Tibial artery (tissue), 4 donors: ENCODE measurements at regions of chr3 and their contacts with region 1.

Region 1: GRCh38 chr3:128680602-128681368 is 30.2 kb upstream of the RPN1 start:
- DNase-seq: peak; percentile 99 to 100
- H3K4me3 ChIP-seq: peak overlapping the region; percentile 58 to 64
- H3K27ac ChIP-seq: peak overlapping the region; percentile 81 to 87
- H3K4me1 ChIP-seq: peaks cover 0 to 6% (median 2%) of the 10 kb centered on the region in 4 donors
- H3K27me3 ChIP-seq: no peaks in the 10 kb centered on the region
- CTCF ChIP-seq: peak; percentile 95 to 100

Region 2: DNA sequence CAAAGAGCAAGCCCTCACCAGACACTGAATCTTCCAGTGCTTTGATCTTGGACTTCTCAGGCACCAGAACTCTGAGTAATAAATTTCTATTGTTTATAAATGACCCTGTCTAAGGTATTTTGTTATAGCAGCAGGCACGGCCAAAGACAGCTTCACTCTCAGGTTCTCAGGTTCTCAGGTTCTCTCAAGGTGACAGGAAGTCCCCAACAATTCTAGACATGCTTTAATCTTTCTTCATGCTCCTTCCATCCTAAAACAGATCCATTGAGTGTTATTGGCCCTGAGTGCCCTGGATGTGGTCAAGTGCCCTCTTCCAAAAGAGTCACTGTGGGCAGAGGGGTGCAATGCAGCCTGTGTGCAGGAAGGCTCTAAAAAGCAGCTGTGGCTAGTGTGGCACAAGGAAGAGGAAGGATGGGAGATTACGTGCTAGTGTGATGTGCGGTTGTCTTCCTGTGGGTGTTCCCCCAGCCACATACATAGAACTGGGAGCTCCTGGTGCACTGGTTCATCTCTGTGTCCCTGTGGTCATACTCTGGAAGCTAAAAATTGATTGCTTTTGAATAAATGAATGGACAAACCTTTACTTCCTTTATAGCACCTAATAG is 34.2 kb after region 1 on chr3:
- intact Hi-C with region 1: no loop called
- DNase-seq: no peak
- H3K4me3 ChIP-seq: no peak overlapping the region
- H3K27ac ChIP-seq: no peak overlapping the region
- H3K4me1 ChIP-seq: no peaks in the 10 kb centered on the region
- H3K27me3 ChIP-seq: no peaks in the 10 kb centered on the region
- CTCF ChIP-seq: no peak

Region 3: GRCh38 chr3:128725932-128726690 is 45.3 kb after region 1 on chr3 and contains the start of gene RAB7A:
- intact Hi-C with region 1: loop called (anchors 5 kb)
- DNase-seq: peak; percentile 98 to 99
- H3K4me3 ChIP-seq: peak within 1 kb of the TSS; percentile 93 to 99
- H3K27ac ChIP-seq: peak within 1 kb of the TSS; percentile 90 to 100
- H3K4me1 ChIP-seq: peaks cover 0 to 48% (median 37%) of the 10 kb centered on the region in 4 donors
- H3K27me3 ChIP-seq: no peaks in the 10 kb centered on the region
- CTCF ChIP-seq: peak in 1 of 2 experiments; percentile 23

Region 4: GRCh38 chr3:128794770-128795649 is 114.2 kb after region 1 on chr3:
- intact Hi-C with region 1: loop called (anchors 5 kb)
- DNase-seq: peak in 1 of 2 donors; percentile 60
- H3K4me3 ChIP-seq: no peak overlapping the region
- H3K27ac ChIP-seq: no peak overlapping the region
- H3K4me1 ChIP-seq: peaks cover 0 to 41% (median 15%) of the 10 kb centered on the region in 4 donors
- H3K27me3 ChIP-seq: no peaks in the 10 kb centered on the region
- CTCF ChIP-seq: peak; percentile 74 to 77

Region 5: DNA sequence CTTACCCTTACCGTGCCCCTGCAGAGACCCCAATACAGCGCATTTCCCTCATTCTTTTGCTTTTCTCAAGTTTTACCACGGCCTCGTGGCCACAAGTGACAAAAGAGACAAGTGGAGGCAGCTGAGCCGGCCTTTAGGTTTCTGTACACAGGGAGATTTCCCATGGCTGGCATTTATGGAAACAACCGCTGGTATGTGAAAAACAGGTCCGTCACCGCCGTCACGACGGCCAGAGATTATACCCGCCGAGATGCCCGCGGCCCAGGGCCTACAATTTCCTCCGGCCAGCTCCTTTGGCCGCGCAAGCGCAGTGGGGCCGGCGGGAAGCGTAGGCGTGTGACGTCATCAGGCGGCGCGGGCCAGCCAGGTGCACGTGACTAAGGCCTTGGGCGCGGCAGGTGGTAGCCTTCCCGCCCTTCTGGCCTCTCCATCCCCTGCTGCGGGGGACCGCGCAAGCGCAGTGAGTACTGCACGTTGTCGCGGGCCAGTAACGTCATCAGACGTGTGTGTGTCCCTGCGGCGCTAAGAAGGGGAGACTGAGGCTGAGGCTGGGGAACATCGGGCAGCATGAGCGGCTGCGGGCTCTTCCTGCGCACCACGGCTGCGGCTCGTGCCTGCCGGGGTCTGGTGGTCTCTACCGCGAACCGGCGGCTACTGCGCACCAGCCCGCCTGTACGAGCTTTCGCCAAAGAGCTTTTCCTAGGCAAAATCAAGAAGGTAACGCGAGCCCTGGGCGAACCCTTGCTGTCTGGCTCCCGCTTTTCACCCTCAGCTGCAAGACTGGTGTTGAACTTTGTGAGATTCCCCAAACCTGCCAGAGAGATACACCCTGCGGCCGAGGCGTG is 198.6 kb after region 1 on chr3 and contains the start of gene ACAD9:
- intact Hi-C with region 1: loop called (anchors 5 kb)
- DNase-seq: peak; percentile 97 to 99
- H3K4me3 ChIP-seq: peak within 1 kb of the TSS; percentile 74 to 76
- H3K27ac ChIP-seq: peak within 1 kb of the TSS; percentile 91 to 96
- H3K4me1 ChIP-seq: peaks cover 0 to 42% (median 28%) of the 10 kb centered on the region in 4 donors
- H3K27me3 ChIP-seq: no peaks in the 10 kb centered on the region
- CTCF ChIP-seq: peak in 1 of 2 experiments; percentile 25